ENCODE measurements at regions of chr3 and their contacts with region 1.

Region 1: GRCh38 chr3:18444595-18445400 is 19.7 kb upstream of the SATB1 start:
- DNase-seq: peak; percentile 76 to 88
- ATAC-seq: peak; percentile 78 to 88 (median 84)
- H3K4me3 ChIP-seq: peak overlapping the region; percentile 80
- H3K4me3 Mint-ChIP-seq: peak overlapping the region; percentile 98
- H3K27ac ChIP-seq: peak overlapping the region; percentile 76
- H3K27ac Mint-ChIP-seq: peak overlapping the region; percentile 88 to 97
- H3K4me1 ChIP-seq: peaks cover 23% of the 10 kb centered on the region
- H3K4me1 Mint-ChIP-seq: peaks cover 58 to 69% of the 10 kb centered on the region in 2 donors
- H3K27me3 ChIP-seq: no peaks in the 10 kb centered on the region
- H3K27me3 Mint-ChIP-seq: no peaks in the 10 kb centered on the region
- CTCF ChIP-seq: no peak

Region 2: DNA sequence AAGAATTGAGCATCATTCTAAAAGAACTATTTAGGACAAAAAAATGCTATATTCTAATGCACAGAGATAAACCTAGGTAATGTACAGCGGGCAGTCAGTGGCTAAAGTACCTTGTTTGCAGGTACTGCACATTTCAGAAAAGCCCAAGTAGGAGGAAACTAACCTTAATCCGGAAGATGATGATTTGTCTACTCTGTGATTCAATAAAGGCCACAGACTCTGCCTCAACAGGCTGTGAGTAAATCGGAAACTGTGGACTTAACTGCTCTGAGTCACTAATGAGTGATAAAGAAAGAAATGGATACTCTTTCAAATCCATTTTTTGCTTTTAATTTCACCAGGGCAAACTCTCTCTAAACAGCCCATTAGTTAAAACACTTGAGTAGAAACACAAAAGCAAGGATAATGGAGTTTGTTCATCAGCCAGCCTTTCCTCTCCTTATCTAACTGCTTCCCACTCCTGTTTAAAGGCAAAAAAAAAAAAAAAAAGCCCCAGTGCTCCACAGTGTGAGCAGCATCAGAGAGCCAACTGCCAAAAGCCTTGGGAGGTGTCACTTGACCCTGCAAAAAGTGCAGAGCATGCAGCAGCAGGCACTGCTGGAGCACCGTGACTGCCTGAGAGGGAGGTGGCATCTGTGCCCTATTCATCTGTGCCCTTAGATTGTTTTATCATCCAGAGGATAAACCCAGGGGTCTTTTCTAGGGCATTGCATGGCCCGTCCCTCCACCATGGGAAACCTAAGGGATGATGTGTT is 207.4 kb before region 1 on chr3:
- intact Hi-C with region 1: no loop called
- DNase-seq: no peak
- ATAC-seq: no peak
- H3K4me3 ChIP-seq: no peak overlapping the region
- H3K4me3 Mint-ChIP-seq: no peak overlapping the region
- H3K27ac ChIP-seq: no peak overlapping the region
- H3K27ac Mint-ChIP-seq: no peak overlapping the region
- H3K4me1 ChIP-seq: no peaks in the 10 kb centered on the region
- H3K4me1 Mint-ChIP-seq: no peaks in the 10 kb centered on the region
- H3K27me3 ChIP-seq: no peaks in the 10 kb centered on the region
- H3K27me3 Mint-ChIP-seq: peaks cover 9 to 11% of the 10 kb centered on the region in 2 donors
- CTCF ChIP-seq: no peak

Region 3: DNA sequence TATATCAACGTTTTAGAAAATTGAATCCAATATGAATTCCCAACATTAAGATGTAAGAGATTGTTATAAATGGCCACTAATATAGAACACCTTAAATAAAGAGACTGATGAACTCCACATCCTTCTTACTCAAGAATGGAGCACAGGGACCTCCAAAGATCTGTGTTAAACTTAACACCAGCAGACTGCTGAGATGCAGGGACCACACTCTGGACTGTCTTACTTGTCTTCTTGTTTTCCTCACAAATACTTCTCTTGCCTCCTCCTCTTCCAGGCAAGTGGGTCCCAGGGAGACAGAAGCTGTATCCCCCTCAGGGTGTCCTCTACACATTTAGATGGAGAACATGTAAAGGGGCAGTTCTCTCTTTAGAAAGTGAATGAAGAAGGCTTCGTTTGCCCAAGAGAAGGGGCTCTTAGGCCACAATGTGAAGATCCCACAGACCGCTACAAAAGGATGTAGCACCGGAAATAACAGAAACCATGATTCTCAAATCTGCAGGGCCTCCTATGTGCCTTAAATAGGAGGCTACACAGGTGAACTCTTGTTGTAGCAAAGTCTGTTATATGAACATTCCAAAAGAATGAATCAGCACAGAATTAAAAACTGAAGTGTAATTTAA is 71.9 kb before region 1 on chr3:
- intact Hi-C with region 1: loop called (anchors 2 kb)
- DNase-seq: peak; percentile 19 to 65
- ATAC-seq: peak; percentile 69 to 92 (median 75)
- H3K4me3 ChIP-seq: no peak overlapping the region
- H3K4me3 Mint-ChIP-seq: peak overlapping the region; percentile 69
- H3K27ac ChIP-seq: no peak overlapping the region
- H3K27ac Mint-ChIP-seq: peak overlapping the region in 1 of 2 donors; percentile 63
- H3K4me1 ChIP-seq: peaks cover 9% of the 10 kb centered on the region
- H3K4me1 Mint-ChIP-seq: peaks cover 62 to 66% of the 10 kb centered on the region in 2 donors
- H3K27me3 ChIP-seq: no peaks in the 10 kb centered on the region
- H3K27me3 Mint-ChIP-seq: no peaks in the 10 kb centered on the region
- CTCF ChIP-seq: no peak

Region 4: GRCh38 chr3:18393906-18394305 is 50.9 kb before region 1 on chr3:
- intact Hi-C with region 1: no loop called
- DNase-seq: peak in 1 of 2 donors; percentile 38
- ATAC-seq: no peak
- H3K4me3 ChIP-seq: no peak overlapping the region
- H3K4me3 Mint-ChIP-seq: no peak overlapping the region
- H3K27ac ChIP-seq: no peak overlapping the region
- H3K27ac Mint-ChIP-seq: peak overlapping the region in 1 of 2 donors; percentile 33
- H3K4me1 ChIP-seq: no peaks in the 10 kb centered on the region
- H3K4me1 Mint-ChIP-seq: peaks cover 27 to 31% of the 10 kb centered on the region in 2 donors
- H3K27me3 ChIP-seq: no peaks in the 10 kb centered on the region
- H3K27me3 Mint-ChIP-seq: no peaks in the 10 kb centered on the region
- CTCF ChIP-seq: no peak

Region 5: DNA sequence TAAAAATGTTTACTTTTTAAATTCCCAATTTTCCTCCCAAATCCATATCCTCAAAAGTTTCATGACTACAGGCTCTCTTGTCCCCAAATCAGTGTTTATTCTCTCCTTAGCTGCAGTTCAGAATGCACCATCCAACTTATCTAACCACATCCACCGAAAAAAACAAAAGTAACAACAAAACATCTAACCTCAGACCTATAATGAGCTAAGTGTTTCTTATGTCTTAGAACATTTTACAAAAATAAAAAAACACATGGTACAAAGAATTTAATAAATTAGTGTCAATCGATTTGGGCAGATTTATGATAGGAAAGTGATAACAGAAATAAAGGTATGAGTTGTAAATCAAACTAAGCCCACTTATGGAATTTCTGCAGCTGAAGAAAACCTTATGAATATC is 33.3 kb before region 1 on chr3:
- intact Hi-C with region 1: loop called (anchors 5 kb)
- DNase-seq: peak in 1 of 2 donors; percentile 57
- ATAC-seq: peak in 2 of 3 donors; percentile 62 to 75
- H3K4me3 ChIP-seq: no peak overlapping the region
- H3K4me3 Mint-ChIP-seq: no peak overlapping the region
- H3K27ac ChIP-seq: no peak overlapping the region
- H3K27ac Mint-ChIP-seq: peak overlapping the region in 1 of 2 donors; percentile 13
- H3K4me1 ChIP-seq: peaks cover 6% of the 10 kb centered on the region
- H3K4me1 Mint-ChIP-seq: peaks cover 32 to 46% of the 10 kb centered on the region in 2 donors
- H3K27me3 ChIP-seq: no peaks in the 10 kb centered on the region
- H3K27me3 Mint-ChIP-seq: no peaks in the 10 kb centered on the region
- CTCF ChIP-seq: no peak

Region 6: DNA sequence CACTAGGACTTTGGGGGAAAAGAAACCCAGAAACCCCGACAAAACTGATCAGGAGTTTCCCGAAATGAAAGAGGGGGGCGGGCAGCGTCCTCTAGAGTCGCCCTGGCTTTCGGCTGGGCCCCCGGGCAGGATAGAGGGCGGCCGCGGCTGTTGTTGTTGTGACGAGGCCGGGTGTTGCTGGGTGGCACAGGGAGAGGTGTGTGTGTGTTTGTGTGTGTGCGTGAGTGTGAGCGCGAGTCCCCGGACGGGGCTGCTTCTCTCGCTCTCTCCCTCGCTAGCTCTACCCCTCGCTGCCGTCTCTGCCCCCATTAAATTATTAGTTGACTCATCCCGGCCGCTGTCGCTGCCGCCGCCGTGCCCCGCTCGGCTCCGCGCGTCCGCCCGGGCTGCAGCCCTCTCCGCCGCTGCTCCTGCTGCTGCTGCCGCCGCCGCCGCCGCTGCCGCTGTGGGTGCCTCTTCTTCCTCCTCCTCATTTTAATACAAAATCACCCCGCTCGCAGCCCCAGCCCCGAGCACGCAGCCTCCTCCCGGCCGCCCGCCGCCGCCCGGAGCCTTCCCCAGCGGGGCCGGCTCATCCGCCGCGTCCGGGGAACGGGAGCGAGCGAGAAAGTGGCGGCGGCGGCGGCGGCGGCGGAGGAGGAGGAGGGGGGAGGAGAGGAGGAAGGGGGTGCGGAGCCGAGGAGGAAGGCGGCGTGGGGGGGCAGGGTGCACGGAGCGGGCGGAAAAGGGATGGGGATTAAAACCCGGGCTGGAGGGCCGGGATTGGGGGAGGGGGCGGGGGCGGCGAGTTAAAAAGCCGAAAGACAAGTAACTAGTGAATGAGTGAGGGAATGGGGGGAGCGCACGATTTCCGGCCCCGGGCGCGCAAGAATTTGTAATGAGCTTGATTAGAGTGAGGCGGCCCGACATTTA is 19.8 kb before region 1 on chr3 and contains the start of gene SATB1:
- intact Hi-C with region 1: loop called (anchors 1 kb)
- DNase-seq: peak; percentile 70 to 78
- ATAC-seq: peak; percentile 64 to 78 (median 71)
- H3K4me3 ChIP-seq: peak within 1 kb of the TSS; percentile 92
- H3K4me3 Mint-ChIP-seq: peak within 1 kb of the TSS; percentile 99
- H3K27ac ChIP-seq: peak within 1 kb of the TSS; percentile 90
- H3K27ac Mint-ChIP-seq: peak within 1 kb of the TSS; percentile 94 to 99
- H3K4me1 ChIP-seq: peaks cover 18% of the 10 kb centered on the region
- H3K4me1 Mint-ChIP-seq: peaks cover 66 to 80% of the 10 kb centered on the region in 2 donors
- H3K27me3 ChIP-seq: no peaks in the 10 kb centered on the region
- H3K27me3 Mint-ChIP-seq: no peaks in the 10 kb centered on the region
- CTCF ChIP-seq: no peak
- total RNA-seq, gene SATB1: 137 to 162 (median 151) TPM

Region 7: DNA sequence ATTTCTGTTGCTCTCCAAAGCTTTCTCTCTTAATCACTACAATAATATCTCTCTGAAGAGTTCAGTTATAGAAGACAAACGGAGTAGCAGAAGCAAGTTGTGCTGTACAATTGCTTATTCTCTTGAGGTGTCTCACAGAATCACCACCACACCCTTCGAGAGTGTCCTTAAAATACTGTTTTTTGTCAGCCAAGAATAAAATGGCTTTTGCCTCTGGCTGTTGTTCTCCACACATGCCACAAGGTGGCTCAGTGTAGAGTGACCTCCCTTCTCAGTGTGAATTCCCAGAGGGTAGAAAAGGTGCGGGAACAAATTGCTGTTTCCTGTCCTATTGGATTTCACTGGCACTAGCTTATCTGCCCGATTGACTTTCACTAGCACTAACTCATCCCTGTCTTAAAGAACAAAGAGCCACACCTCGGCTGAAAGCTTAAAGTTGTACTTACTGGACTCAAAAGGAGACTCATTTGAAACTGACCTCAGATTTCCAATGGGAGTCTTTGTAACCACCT is 114.6 kb after region 1 on chr3:
- intact Hi-C with region 1: loop called (anchors 5 kb)
- DNase-seq: peak in 1 of 2 donors; percentile 75
- ATAC-seq: peak; percentile 56 to 73 (median 65)
- H3K4me3 ChIP-seq: no peak overlapping the region
- H3K4me3 Mint-ChIP-seq: peak overlapping the region; percentile 52
- H3K27ac ChIP-seq: no peak overlapping the region
- H3K27ac Mint-ChIP-seq: peak overlapping the region; percentile 72 to 83
- H3K4me1 ChIP-seq: peaks cover 3% of the 10 kb centered on the region
- H3K4me1 Mint-ChIP-seq: peaks cover 37 to 39% of the 10 kb centered on the region in 2 donors
- H3K27me3 ChIP-seq: no peaks in the 10 kb centered on the region
- H3K27me3 Mint-ChIP-seq: no peaks in the 10 kb centered on the region
- CTCF ChIP-seq: peak; percentile 74

Region 8: GRCh38 chr3:18758047-18758704 is 313.4 kb after region 1 on chr3:
- intact Hi-C with region 1: loop called (anchors 2 kb)
- DNase-seq: peak in 1 of 2 donors; percentile 92
- ATAC-seq: peak; percentile 90 to 99 (median 97)
- H3K4me3 ChIP-seq: no peak overlapping the region
- H3K4me3 Mint-ChIP-seq: no peak overlapping the region
- H3K27ac ChIP-seq: no peak overlapping the region
- H3K27ac Mint-ChIP-seq: peak overlapping the region; percentile 17 to 27
- H3K4me1 ChIP-seq: no peaks in the 10 kb centered on the region
- H3K4me1 Mint-ChIP-seq: peaks cover 13 to 19% of the 10 kb centered on the region in 2 donors
- H3K27me3 ChIP-seq: no peaks in the 10 kb centered on the region
- H3K27me3 Mint-ChIP-seq: no peaks in the 10 kb centered on the region
- CTCF ChIP-seq: peak; percentile 90